ENCODE measurements at regions of chr19 and their contacts with region 1.

Region 1: DNA sequence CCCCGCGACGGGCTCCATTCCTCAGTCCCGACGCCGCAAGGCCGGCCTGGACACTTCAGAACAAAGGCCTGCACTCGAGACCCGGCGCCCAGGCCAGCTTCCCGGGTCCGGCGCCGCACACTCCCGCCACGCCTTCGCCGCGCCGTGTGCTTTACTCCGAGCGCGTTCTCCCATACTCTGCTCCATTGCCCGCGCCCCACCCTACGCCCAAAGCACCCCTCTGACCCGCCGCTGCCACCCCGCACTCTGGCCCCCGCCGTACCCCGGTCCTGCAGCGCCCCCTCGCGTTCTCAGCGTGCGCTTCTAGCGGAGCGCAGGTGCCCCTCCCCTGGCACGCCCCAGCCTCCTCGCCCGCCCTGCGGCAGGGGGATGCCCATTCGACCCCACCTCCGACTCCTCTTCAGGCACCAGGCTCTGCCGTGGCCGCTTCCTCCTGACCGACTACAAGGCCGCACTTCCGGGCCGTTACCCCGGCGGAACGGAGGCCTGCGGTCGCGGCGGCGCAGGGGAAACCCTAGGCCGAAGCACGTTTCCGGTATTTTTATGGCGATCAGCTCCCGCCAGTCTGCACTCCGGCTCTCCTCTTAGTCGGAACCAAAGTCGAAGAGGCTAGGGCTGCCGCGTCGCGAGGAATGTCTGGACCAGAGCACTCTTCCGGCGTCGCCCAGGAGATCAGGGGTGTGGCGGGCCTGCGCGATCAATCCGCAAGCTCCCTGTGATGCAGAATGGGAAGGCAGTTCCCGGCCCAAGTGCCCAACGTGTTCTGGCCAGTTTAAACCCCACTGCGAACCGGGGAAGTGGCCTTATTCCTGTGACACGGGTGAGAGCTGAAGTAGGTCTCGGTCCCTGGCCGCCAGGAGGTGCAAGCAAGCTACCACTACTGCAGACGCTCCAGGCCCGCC is at the start of gene ZBTB45:
- DNase-seq: peak; percentile 88
- ATAC-seq: peak; percentile 83
- H3K4me3 Mint-ChIP-seq: peak within 1 kb of the TSS; percentile 95
- H3K27ac Mint-ChIP-seq: peak within 1 kb of the TSS; percentile 97
- H3K4me1 Mint-ChIP-seq: peaks cover 39% of the 10 kb centered on the region
- H3K27me3 Mint-ChIP-seq: no peaks in the 10 kb centered on the region
- CTCF ChIP-seq: no peak
- total RNA-seq, gene ZBTB45: 18.0 and 20.2 TPM in 2 replicates

Region 2: DNA sequence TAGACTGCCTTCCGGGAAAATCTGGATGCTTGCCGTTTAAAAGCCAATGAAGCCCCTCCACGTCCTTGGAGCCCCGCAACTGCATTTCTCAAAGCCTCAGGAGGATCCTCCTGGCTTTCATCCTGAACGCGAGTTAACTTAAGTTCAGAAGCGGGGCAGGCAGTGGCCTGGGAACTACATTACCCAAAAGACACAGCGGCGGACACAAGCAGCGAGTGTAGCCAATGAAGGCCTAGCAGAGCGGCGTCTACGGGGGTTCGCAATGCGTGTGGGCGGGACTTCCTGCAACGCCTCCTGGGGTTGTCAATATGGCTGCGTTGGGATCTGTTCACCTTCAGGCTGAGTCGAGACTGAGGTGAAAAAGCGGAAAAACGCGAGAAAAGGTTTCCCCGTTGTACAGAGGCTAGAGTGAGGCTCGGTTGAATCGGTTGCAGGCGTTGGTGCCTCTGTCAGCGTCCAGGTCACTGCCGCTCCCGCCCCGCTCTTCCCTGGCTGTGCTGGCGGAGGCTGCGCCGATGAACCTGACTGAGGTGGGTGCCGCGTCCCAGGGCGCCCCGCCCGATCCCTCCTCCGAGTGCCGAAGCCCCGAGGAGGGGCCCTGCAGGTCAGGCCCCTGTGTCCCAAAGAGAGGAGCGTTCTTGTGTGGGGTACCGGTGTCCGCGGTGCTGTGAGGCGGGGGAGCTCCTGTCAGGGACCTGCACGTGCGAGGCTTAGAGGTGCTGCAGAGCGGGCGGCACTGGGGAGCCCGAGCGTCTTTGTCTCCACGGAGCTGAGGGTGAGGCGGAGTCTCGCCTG is 1108.5 kb before region 1 on chr19 and contains the start of gene ZNF17:
- CTCF ChIA-PET with region 1: no interaction called
- POLR2A ChIA-PET with region 1: no interaction called
- intact Hi-C with region 1: loop called (anchors 5 kb)
- DNase-seq: peak; percentile 79
- ATAC-seq: peak; percentile 100
- H3K4me3 Mint-ChIP-seq: peak within 1 kb of the TSS; percentile 94
- H3K27ac Mint-ChIP-seq: peak within 1 kb of the TSS; percentile 85
- H3K4me1 Mint-ChIP-seq: peaks cover 24% of the 10 kb centered on the region
- H3K27me3 Mint-ChIP-seq: no peaks in the 10 kb centered on the region
- CTCF ChIP-seq: no peak
- total RNA-seq, gene ZNF17: 16.1 and 18.6 TPM in 2 replicates

Region 3: GRCh38 chr19:58228585-58229254 is 290.9 kb before region 1 on chr19 and contains the start of gene ZNF544:
- CTCF ChIA-PET with region 1: interaction called, 3 read pairs
- POLR2A ChIA-PET with region 1: interaction called, 8 read pairs
- intact Hi-C with region 1: loop called (anchors 5 kb)
- DNase-seq: peak; percentile 66
- ATAC-seq: peak; percentile 83
- H3K4me3 Mint-ChIP-seq: peak within 1 kb of the TSS; percentile 97
- H3K27ac Mint-ChIP-seq: peak within 1 kb of the TSS; percentile 85
- H3K4me1 Mint-ChIP-seq: peaks cover 23% of the 10 kb centered on the region
- H3K27me3 Mint-ChIP-seq: no peaks in the 10 kb centered on the region
- CTCF ChIP-seq: no peak
- total RNA-seq, gene ZNF544: 45.2 and 61.7 TPM in 2 replicates

Region 4: DNA sequence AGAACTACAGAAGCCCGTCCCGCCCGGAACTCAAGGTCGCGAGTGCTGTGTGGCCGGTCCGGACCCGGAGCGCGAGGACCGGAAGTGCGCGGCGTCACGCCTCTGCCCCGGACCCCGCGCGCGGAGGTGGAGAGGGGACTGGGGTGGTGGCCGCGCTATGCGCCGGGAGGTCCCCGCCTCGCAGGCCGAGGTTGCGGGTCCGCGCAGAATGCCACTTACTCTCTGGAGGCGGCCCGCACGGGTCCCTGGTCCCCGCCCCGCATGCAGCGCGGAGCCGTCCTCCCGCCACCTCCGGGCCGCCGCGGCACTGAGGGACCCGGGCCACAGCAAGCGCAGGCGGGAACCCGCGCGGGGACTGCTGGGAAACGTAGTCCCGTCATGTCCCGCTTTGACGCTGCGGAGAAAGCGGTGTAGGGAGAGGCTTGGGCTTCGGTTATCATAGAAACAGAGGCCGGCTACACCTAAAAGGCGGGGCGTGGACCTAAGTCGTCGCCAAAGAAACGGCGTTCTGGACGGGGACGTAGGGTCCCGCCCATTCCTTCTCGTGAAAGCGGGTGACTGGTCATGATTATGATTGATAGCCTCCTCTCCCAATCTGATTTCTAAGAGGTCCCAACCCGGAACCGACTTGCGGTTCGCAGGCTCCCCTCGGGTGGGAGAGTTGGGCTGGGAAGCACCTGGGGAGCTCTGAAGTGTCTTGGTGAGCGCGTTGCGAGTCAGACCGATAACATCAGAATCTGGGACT is 138.7 kb before region 1 on chr19 and contains the start of gene ZNF837:
- CTCF ChIA-PET with region 1: interaction called, 3 read pairs
- POLR2A ChIA-PET with region 1: interaction called, 13 read pairs
- intact Hi-C with region 1: loop called (anchors 1 kb)
- DNase-seq: peak; percentile 96
- ATAC-seq: peak; percentile 86
- H3K4me3 Mint-ChIP-seq: peak within 1 kb of the TSS; percentile 83
- H3K27ac Mint-ChIP-seq: peak within 1 kb of the TSS; percentile 87
- H3K4me1 Mint-ChIP-seq: peaks cover 37% of the 10 kb centered on the region
- H3K27me3 Mint-ChIP-seq: no peaks in the 10 kb centered on the region
- CTCF ChIP-seq: no peak
- total RNA-seq, gene ZNF837: 3.1 and 3.5 TPM in 2 replicates

Region 5: DNA sequence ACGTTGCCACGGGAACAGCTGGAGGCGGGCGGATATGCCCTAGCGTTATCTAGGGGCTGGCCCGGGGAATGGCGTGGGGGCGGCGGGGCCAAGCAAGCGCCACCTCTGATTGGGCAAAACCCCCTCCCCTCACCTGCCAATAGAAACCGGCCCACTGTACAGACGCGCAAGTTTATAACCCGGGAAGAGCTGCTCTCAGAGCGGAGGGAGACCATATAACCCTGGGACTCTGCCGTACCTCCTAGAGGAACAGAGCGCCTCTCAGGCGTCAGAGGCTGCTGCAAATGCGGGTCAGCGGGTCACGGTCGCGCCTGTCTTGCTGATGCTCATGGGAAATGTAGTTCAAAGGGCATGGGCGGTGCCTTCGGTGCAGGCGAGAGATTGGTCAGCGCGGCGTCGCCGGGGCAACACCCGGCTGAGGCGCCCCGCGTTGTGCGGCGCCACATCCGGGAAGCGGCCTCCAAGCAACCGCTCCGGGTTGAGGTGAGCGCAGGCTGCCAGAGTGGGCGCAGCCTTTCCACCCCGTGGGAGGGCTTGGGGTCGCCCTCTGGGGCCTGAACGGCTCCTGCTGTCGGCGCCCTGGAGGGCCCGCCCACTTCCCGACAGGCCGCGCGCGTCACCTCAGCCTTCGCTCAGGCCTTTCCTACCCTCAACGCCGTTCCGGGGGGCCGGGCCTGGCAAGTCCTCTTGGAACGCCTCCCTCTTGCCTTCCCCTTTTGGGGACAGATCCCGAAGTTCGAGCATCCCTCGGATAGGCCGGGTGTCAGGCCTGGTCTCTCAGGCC is 43.7 kb before region 1 on chr19 and contains the start of gene ZNF446:
- CTCF ChIA-PET with region 1: interaction called, 3 read pairs
- POLR2A ChIA-PET with region 1: interaction called, 17 read pairs
- intact Hi-C with region 1: loop called (anchors 5 kb)
- DNase-seq: peak; percentile 91
- ATAC-seq: peak; percentile 88
- H3K4me3 Mint-ChIP-seq: peak within 1 kb of the TSS; percentile 94
- H3K27ac Mint-ChIP-seq: peak within 1 kb of the TSS; percentile 95
- H3K4me1 Mint-ChIP-seq: peaks cover 20% of the 10 kb centered on the region
- H3K27me3 Mint-ChIP-seq: no peaks in the 10 kb centered on the region
- CTCF ChIP-seq: no peak
- total RNA-seq, gene ZNF446: 9.6 and 10.4 TPM in 2 replicates

Region 6: GRCh38 chr19:58538257-58539168 is 18.9 kb after region 1 on chr19:
- CTCF ChIA-PET with region 1: interaction called, 17 read pairs
- POLR2A ChIA-PET with region 1: interaction called, 82 read pairs
- intact Hi-C with region 1: no loop called
- DNase-seq: no peak
- ATAC-seq: peak; percentile 62
- H3K4me3 Mint-ChIP-seq: peak overlapping the region; percentile 57
- H3K27ac Mint-ChIP-seq: no peak overlapping the region
- H3K4me1 Mint-ChIP-seq: peaks cover 8% of the 10 kb centered on the region
- H3K27me3 Mint-ChIP-seq: peaks cover 15% of the 10 kb centered on the region
- CTCF ChIP-seq: no peak

Region 7: DNA sequence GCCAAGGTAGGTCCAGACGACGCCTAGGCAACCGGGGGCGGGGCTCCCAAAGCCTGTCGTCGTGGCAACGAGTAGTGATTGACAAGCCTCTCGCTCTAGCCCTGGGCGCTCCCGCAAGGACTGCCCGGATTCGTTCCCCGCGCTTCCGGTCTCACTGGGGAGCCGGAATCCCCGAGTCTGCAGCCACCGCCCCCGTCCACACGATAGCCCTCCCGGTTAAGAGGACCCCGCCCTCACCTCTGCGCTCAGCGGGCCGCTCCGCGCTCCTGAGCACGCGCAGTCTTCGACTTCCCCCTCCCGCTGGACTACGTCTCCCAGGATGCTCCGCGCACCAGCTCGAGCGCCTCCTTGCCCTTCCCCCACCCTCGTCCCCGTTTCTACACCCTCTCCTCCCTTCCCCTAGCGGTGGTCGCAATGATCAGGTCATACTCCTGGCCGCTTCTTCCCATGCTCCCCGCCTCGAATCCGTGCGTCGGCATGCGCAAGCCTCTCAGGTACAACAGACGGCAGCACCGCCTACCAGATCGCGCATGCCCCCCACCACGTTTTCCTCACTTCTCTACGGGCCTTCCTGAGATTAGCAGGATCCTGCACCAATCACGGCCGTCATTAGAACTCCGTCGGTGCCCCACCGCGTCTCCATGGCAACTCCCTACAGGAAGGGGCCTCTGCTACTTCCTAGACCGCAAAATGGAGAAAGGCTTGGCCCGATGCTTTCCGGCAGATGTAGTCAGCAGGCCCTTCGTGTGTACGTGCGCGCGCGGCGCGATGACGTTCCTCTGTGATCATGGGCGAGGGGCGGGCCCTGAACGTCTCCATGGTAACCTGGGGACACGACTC is 53.4 kb after region 1 on chr19 and contains the start of gene MZF1:
- CTCF ChIA-PET with region 1: interaction called, 19 read pairs
- POLR2A ChIA-PET with region 1: interaction called, 75 read pairs
- intact Hi-C with region 1: loop called (anchors 1 kb)
- DNase-seq: peak; percentile 100
- ATAC-seq: peak; percentile 61
- H3K4me3 Mint-ChIP-seq: peak within 1 kb of the TSS; percentile 97
- H3K27ac Mint-ChIP-seq: peak within 1 kb of the TSS; percentile 100
- H3K4me1 Mint-ChIP-seq: peaks cover 44% of the 10 kb centered on the region
- H3K27me3 Mint-ChIP-seq: no peaks in the 10 kb centered on the region
- CTCF ChIP-seq: no peak
- total RNA-seq, gene MZF1: 41.9 and 54.5 TPM in 2 replicates